Dorsolateral prefrontal cortex (tissue), 120 donors: ENCODE measurements at regions of chr4 and their contacts with region 1.

Region 1: GRCh38 chr4:180664766-180665368 is 1578.3 kb upstream of the TENM3 start:
- DNase-seq: peak in 7 of 10 donors; percentile 45 to 92 (median 58)
- H3K4me3 ChIP-seq: peak overlapping the region in 32 of 59 donors; percentile 0 to 47 (median 24)
- H3K27ac ChIP-seq: no peak overlapping the region
- H3K27me3 ChIP-seq: no peaks in the 10 kb centered on the region
- CTCF ChIP-seq: peak; percentile 70 to 96 (median 86)

Region 2: DNA sequence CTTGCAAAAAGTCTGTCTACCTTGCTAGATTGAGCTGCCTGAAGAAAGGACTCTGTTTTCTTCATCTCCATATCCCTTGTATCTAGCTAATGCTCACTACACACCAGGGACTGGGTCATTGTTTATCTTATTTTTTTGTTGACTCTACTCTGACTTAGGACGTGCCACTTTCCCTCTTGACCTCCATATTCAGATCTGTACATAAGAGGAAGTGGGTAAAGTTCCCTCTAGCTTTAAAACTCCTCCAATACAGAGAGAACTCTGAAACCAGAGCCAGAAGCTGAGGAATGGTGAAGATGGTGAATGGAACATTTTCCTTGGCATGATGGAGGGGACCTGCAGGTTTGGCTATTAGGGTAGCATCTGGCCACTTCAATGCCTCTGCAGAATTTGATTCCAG is 447.8 kb before region 1 on chr4:
- intact Hi-C with region 1: no loop called
- DNase-seq: no peak
- H3K4me3 ChIP-seq: no peak overlapping the region
- H3K27ac ChIP-seq: no peak overlapping the region
- H3K27me3 ChIP-seq: no peaks in the 10 kb centered on the region
- CTCF ChIP-seq: no peak

Region 3: DNA sequence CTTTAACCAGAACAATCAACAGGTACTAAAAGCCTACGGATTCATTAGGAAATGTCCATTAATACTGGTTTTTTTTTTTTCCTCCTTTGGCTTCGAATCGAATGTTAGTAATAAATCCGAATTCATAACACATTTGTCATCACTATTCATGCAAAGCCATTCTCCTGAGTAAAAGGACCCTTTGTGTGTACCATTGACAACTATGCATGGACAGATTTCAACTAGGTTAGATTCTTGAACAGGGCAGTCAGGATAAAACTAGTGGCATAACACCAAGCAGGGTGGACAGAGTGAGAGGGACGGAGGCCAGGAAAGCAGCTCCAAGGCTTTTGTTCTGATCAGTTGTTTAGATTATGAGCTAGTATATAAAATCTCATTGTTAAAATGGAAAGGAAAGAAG is 143.7 kb before region 1 on chr4:
- intact Hi-C with region 1: no loop called
- DNase-seq: no peak
- H3K4me3 ChIP-seq: no peak overlapping the region
- H3K27ac ChIP-seq: no peak overlapping the region
- H3K27me3 ChIP-seq: no peaks in the 10 kb centered on the region
- CTCF ChIP-seq: no peak

Region 4: GRCh38 chr4:180953572-180953971 is 288.7 kb after region 1 on chr4:
- intact Hi-C with region 1: loop called in 1 of 2 experiments (anchors 10 kb)
- DNase-seq: no peak
- H3K4me3 ChIP-seq: no peak overlapping the region
- H3K27ac ChIP-seq: no peak overlapping the region
- H3K27me3 ChIP-seq: peaks cover 0 to 4% (median 0%) of the 10 kb centered on the region in 45 donors
- CTCF ChIP-seq: no peak